ENCODE measurements at regions of chrX and their contacts with region 1.

Region 1: GRCh38 chrX:125295337-125295736 is 24.3 kb upstream of the TEX13C start:
- DNase-seq: no peak
- H3K4me3 Mint-ChIP-seq: no peak overlapping the region
- H3K27ac Mint-ChIP-seq: peak overlapping the region; percentile 71
- H3K4me1 Mint-ChIP-seq: peaks cover 22% of the 10 kb centered on the region
- H3K27me3 Mint-ChIP-seq: no peaks in the 10 kb centered on the region

Region 2: DNA sequence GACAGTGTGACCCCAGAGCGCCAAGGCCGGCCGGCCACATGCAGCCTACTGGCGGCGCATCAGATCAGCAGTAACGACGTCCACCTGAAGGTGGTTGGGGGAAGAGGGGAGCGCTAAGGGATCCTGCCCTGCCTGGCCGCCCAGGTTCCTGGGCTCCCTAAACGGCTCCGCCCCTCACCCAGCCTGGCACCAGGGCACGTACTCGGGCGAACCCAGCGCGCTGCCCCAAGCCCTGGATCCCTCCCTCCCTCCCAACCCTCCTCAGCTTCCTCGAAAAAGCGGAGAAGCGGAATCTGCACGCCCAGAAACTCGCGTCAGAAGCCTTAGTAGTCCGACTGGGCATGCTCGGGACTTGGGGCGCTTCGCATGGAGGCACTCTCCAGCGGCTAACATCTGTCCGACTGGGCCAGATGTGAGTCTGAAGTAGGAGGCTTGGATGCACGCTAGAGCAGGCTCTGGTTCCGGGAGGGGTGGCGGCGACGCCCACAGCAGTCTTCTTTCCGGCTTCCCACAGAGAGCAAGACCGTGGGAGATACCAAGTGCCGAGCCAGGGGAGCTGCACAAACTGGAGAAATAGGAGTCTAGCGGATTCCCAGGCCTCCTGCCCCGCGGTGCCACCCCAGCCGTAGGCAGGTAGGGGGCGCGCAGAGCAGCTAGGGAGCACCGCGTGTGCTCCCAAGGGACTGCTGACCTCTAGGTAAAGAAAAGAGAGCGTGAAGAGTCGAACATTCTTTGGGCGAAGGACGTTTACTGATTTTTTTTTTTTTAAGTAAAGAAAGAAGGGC is 90.0 kb before region 1 on chrX:
- CTCF ChIA-PET with region 1: no interaction called
- POLR2A ChIA-PET with region 1: no interaction called
- intact Hi-C with region 1: loop called (anchors 10 kb)
- DNase-seq: peak; percentile 46
- H3K4me3 Mint-ChIP-seq: peak overlapping the region; percentile 67
- H3K27ac Mint-ChIP-seq: no peak overlapping the region
- H3K4me1 Mint-ChIP-seq: peaks cover 17% of the 10 kb centered on the region
- H3K27me3 Mint-ChIP-seq: peaks cover 30% of the 10 kb centered on the region

Region 3: GRCh38 chrX:125248931-125249330 is 46.4 kb before region 1 on chrX:
- CTCF ChIA-PET with region 1: no interaction called
- POLR2A ChIA-PET with region 1: no interaction called
- intact Hi-C with region 1: loop called (anchors 1 kb)
- DNase-seq: no peak
- H3K4me3 Mint-ChIP-seq: no peak overlapping the region
- H3K27ac Mint-ChIP-seq: no peak overlapping the region
- H3K4me1 Mint-ChIP-seq: no peaks in the 10 kb centered on the region
- H3K27me3 Mint-ChIP-seq: no peaks in the 10 kb centered on the region

Region 4: DNA sequence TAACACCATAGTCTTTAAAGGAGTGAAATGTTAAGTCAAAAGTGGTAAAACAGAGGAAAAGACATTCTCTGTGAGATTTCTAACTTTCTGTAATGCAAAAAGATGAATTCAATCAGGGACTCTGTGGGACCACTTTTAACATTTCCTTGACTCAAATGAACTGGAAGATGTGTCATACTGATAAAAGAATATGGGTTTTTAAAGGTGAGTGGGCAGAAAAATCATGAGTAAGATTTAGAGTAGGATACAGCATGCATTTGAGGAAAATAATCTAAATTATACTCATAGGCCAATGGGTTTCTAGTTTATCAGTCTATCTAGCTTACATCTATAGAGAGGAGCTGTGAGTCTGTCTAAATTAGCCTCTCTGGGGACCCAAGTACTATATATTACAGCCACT is 13.3 kb after region 1 on chrX:
- CTCF ChIA-PET with region 1: no interaction called
- POLR2A ChIA-PET with region 1: no interaction called
- intact Hi-C with region 1: no loop called
- DNase-seq: no peak
- H3K4me3 Mint-ChIP-seq: no peak overlapping the region
- H3K27ac Mint-ChIP-seq: no peak overlapping the region
- H3K4me1 Mint-ChIP-seq: peaks cover 2% of the 10 kb centered on the region
- H3K27me3 Mint-ChIP-seq: peaks cover 1% of the 10 kb centered on the region

Region 5: DNA sequence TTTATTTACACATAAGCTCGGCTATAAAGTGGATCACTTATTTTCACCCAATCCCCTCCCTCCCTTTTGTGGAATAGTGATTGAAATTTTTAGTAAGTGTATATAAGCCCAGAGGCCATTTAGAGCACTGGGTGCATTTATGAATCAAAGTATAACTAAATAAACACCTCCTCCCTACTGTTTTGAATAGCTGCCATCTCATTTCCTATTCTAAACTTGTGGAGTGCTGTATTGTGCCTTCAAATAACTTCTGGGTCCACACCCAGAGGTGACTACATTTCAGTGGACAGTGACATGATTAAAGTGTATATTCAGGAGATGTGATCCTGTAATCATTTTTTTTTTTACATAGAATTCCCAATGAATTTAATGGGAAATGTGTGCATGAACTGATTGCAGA is 129.2 kb after region 1 on chrX:
- CTCF ChIA-PET with region 1: no interaction called
- POLR2A ChIA-PET with region 1: no interaction called
- intact Hi-C with region 1: no loop called
- DNase-seq: no peak
- H3K4me3 Mint-ChIP-seq: no peak overlapping the region
- H3K27ac Mint-ChIP-seq: no peak overlapping the region
- H3K4me1 Mint-ChIP-seq: no peaks in the 10 kb centered on the region
- H3K27me3 Mint-ChIP-seq: no peaks in the 10 kb centered on the region